Mammary epithelial cell (primary cell): ENCODE measurements at regions of chr3 and their contacts with region 1.

Region 1: GRCh38 chr3:129543156-129543790 is at the start of gene H1-8:
- DNase-seq: no peak
- H3K4me3 ChIP-seq: no peak within 1 kb of the TSS
- H3K27ac ChIP-seq: no peak within 1 kb of the TSS
- H3K4me1 ChIP-seq: no peaks in the 10 kb centered on the region
- H3K27me3 ChIP-seq: no peaks in the 10 kb centered on the region
- CTCF ChIP-seq: no peak
- total RNA-seq, gene H1-8: not detected

Region 2: GRCh38 chr3:129593595-129594339 is 50.5 kb after region 1 on chr3:
- CTCF ChIA-PET with region 1: no interaction called
- dilution Hi-C with region 1: loop called (anchors 5 kb)
- in situ Hi-C with region 1: no loop called
- intact Hi-C with region 1: no loop called
- DNase-seq: no peak
- H3K4me3 ChIP-seq: no peak overlapping the region
- H3K27ac ChIP-seq: no peak overlapping the region
- H3K4me1 ChIP-seq: no peaks in the 10 kb centered on the region
- H3K27me3 ChIP-seq: no peaks in the 10 kb centered on the region
- CTCF ChIP-seq: no peak

Region 3: GRCh38 chr3:129824926-129825541 is 281.8 kb after region 1 on chr3:
- CTCF ChIA-PET with region 1: no interaction called
- dilution Hi-C with region 1: no loop called
- in situ Hi-C with region 1: no loop called
- intact Hi-C with region 1: no loop called
- DNase-seq: peak; percentile 29
- H3K4me3 ChIP-seq: no peak overlapping the region
- H3K27ac ChIP-seq: no peak overlapping the region
- H3K4me1 ChIP-seq: peaks cover 5% of the 10 kb centered on the region
- H3K27me3 ChIP-seq: no peaks in the 10 kb centered on the region
- CTCF ChIP-seq: peak; percentile 52 to 70